PC-3 (cell line): ENCODE measurements at regions of chr2 and their contacts with region 1.

Region 1: DNA sequence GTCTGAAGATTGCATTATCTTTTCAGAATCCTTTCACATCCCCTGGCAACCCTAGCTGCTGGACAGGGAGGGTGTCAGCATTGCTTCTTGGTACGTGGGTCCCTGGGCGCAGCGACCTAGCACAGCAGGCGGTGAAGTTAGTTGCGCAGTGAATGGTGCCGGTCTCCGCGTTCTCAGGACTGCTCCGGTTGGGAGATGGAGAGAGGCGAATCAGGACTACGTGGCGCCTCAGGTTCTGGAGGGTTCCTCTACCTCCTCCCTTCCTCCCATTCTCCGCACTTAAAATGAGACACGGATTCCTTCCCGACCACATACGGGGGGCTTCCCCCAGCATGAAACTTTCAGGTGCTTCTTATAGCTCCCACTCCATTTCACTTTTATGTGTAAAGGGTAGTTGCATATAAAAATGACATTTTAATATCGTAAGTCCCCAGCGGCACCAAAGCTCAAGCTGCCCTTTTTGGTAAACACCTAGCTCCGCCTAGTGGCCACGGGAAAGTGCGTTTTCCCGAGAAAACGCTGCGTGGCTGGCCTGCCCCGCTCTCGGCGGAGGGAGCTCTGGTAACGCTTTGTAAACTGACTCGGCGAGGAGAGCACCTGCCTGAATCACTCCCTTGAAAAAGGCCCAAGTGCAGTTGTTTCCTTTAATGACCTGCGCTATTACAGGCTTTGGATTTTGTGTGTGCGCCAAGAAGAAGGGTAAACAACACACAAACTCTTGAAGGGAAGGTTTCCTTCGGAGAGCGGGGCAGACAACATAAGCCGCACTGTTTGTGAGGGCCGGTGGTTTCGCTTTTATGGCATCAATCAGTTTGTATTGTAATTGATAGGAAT is 32.9 kb upstream of the INHBB start:
- DNase-seq: peak; percentile 95
- ATAC-seq: peak; percentile 87
- H3K4me3 ChIP-seq: peak overlapping the region; percentile 64
- H3K27ac ChIP-seq: no peak overlapping the region
- H3K4me1 ChIP-seq: peaks cover 4% of the 10 kb centered on the region; the same call in 1 of the 2 replicates
- H3K27me3 ChIP-seq: no peaks in the 10 kb centered on the region
- CTCF ChIP-seq: peak; percentile 98

Region 2: DNA sequence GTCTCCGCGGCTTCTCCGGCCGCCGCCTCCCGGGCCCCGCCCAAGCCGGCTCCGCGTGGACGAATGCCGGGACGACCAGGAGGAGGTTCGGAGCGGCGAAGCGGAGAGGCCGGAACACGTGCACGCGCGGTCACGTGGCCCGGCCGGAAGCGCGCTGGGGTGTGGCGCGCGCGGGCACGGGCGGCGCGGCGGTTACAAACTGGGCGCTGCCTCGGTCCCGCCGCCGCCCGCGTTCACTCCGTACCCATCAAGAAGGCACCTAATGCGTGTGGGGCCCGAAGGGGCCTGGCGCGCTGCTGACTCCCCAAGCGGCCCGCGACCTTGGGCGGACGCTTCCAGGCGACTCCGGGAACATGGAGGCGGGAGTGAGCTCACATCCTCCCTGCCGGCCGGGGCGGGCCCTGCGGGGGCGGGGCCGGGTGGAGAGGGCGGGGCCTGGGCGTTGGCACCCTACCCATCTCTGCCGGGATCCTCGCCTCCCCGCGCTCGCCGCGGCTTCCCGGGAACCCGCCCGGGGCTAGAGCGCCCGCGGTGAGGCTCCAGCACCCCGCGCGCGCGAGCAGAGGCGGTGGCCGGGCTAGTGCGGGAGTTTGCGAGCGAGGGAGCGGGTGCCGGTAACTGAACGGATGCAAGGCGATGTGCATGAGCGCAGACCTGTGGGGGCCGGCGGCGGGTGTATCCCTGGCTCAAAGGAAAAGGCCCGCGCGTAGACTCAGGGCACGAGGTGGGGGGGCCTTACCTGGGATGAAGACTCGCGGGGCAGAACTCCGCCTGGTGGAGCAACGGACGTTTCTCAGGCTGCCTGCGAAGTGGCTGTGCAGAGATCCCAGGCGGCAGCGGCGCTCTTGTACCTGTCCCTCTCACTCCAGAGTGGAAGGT is 89.8 kb before region 1 on chr2 and contains the start of gene TMEM185B:
- CTCF ChIA-PET with region 1: interaction called, 7 read pairs
- POLR2A ChIA-PET with region 1: interaction called, 4 read pairs
- intact Hi-C with region 1: loop called (anchors 1 kb)
- DNase-seq: peak; percentile 88
- ATAC-seq: peak; percentile 91
- H3K4me3 ChIP-seq: peak within 1 kb of the TSS; percentile 70
- H3K27ac ChIP-seq: peak within 1 kb of the TSS; percentile 79
- H3K4me1 ChIP-seq: peaks cover 45% of the 10 kb centered on the region
- H3K27me3 ChIP-seq: no peaks in the 10 kb centered on the region
- CTCF ChIP-seq: peak; percentile 56
- total RNA-seq, gene TMEM185B: 67.5 and 83.6 TPM in 2 replicates

Region 3: DNA sequence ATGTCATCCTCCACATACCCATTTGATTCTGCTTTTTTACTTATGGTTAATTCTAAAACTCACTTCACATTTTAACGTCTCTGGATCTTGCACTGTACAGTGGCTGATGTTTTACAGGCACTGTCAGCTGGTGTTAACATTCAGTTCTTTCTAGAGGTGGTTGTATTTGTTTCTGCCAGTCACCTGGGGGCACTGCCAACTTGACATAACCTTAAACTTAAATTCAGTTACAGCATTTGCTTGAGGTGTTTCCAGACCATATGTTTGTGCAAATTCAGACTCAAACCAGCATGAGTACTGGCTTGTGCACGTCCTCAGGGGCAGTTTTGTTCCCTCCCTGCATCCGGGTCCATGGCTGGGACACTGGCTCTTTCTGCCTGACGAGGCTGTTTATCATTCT is 84.5 kb before region 1 on chr2:
- CTCF ChIA-PET with region 1: interaction called, 7 read pairs
- POLR2A ChIA-PET with region 1: interaction called, 4 read pairs
- intact Hi-C with region 1: loop called (anchors 1 kb)
- DNase-seq: peak; percentile 57
- ATAC-seq: peak; percentile 46
- H3K4me3 ChIP-seq: no peak overlapping the region
- H3K27ac ChIP-seq: no peak overlapping the region
- H3K4me1 ChIP-seq: peaks cover 55% of the 10 kb centered on the region
- H3K27me3 ChIP-seq: no peaks in the 10 kb centered on the region
- CTCF ChIP-seq: peak; percentile 60

Region 4: DNA sequence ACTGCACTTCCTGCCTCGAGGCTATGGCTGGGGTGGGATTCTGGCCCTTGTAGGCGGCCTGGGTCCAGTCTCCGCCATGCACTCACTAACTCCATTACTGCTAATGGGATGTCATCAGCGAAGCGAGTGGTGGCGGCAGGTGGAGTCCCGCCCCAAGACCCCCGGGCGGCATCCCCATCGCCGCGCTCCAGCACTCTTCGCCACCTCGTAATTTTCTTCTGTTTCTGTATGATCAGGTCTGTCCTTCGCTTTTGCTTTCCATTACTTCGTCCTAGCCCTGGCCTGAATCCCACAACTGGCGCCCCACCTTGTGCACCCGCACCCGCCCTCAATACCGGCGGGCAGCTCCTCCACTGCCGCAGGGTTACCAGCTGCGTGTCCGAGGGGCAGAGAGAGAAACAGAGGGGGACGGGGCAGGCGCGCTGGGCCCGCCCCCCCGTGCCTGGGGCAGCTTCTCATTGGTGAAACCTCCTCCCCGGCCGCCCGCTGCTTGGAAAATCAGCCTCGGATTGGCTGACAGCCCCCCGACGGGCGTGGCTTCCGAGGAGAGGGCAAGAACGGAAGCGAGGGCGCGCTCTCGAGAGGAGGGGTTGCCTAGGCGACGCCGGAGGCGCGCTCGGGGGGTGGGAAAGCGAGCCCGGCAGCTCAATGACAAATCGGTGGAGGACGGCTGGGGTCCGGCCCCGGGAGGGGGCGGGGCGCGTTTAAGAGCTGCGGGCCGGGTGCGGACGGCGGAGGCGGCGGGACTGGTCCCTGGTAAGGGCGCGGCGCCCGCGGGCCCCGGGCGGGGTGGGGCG is 60.7 kb before region 1 on chr2 and contains the start of gene RALB:
- CTCF ChIA-PET with region 1: interaction called, 15 read pairs
- POLR2A ChIA-PET with region 1: no interaction called
- intact Hi-C with region 1: loop called (anchors 1 kb)
- DNase-seq: peak; percentile 99
- ATAC-seq: peak; percentile 79
- H3K4me3 ChIP-seq: peak within 1 kb of the TSS; percentile 94
- H3K27ac ChIP-seq: peak within 1 kb of the TSS; percentile 81
- H3K4me1 ChIP-seq: peaks cover 29% of the 10 kb centered on the region
- H3K27me3 ChIP-seq: no peaks in the 10 kb centered on the region
- CTCF ChIP-seq: no peak
- total RNA-seq, gene RALB: 49.1 and 57.9 TPM in 2 replicates

Region 5: DNA sequence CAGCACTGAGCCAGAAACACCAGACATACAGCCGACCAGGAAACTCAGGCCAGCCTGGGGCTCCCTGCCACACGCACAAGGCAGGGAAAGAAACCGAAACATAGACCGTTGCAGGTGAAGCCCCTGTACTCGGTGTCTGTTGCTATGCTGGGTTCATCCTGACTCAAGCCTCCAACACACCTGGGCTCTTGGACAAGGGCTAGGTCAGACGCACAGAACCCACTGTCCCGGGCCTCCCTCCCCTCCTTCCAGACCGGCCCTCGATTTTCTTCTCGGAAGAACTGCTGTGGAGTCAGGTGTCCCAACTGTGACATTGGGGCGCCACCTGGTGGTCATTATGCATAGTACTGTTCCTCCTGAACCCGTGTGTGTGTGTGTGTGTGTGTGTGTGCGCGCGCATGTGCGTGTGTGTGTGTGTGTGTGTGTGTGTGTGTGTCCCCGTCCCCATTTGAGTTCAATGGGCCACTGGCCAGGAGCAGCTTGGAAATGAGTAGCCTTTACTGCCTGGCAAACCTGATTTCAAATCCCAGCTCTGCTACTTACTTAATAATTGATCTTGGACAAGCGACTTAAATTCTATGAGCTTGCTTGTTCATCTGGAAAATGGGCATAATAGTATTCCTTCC is 367.2 kb after region 1 on chr2:
- CTCF ChIA-PET with region 1: interaction called, 4 read pairs
- POLR2A ChIA-PET with region 1: no interaction called
- intact Hi-C with region 1: loop called (anchors 1 kb)
- DNase-seq: peak; percentile 87
- ATAC-seq: peak; percentile 77
- H3K4me3 ChIP-seq: 0 out of 2 replicates have a peak overlapping the region, but pooled peaks have one; percentile 22
- H3K27ac ChIP-seq: no peak overlapping the region
- H3K4me1 ChIP-seq: peaks cover 14% of the 10 kb centered on the region
- H3K27me3 ChIP-seq: no peaks in the 10 kb centered on the region
- CTCF ChIP-seq: peak; percentile 60